Thyroid gland (tissue), 4 donors: ENCODE measurements at regions of chr14 and their contacts with region 1.

Region 1: DNA sequence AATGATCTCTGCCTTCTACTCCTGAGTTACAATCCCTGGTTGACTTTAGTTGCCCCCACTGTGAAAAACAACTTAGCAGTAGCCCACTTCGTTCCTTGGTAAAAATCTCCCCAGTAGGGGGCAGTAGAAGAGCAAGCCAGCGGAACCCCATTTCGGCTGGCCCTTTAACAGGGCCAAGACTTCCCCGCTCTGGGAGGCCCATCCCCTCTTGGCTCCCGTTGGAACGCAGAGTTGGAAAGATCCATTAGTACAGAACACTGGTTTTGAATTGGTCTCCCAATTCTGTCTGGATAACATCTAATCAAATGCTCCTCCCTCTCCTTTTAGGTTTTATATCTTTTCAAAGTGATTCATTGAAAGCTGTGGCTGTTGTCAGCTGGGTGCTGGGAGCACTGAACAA is 1133.3 kb downstream of the BCL11B start:
- DNase-seq: peak; percentile 44 to 48
- H3K4me3 ChIP-seq: no peak overlapping the region
- H3K27ac ChIP-seq: no peak overlapping the region
- H3K4me1 ChIP-seq: no peaks in the 10 kb centered on the region
- H3K27me3 ChIP-seq: no peaks in the 10 kb centered on the region
- CTCF ChIP-seq: peak in 5 of 6 experiments; percentile 19 to 61 (median 42)
- POLR2A ChIP-seq: no peak

Region 2: DNA sequence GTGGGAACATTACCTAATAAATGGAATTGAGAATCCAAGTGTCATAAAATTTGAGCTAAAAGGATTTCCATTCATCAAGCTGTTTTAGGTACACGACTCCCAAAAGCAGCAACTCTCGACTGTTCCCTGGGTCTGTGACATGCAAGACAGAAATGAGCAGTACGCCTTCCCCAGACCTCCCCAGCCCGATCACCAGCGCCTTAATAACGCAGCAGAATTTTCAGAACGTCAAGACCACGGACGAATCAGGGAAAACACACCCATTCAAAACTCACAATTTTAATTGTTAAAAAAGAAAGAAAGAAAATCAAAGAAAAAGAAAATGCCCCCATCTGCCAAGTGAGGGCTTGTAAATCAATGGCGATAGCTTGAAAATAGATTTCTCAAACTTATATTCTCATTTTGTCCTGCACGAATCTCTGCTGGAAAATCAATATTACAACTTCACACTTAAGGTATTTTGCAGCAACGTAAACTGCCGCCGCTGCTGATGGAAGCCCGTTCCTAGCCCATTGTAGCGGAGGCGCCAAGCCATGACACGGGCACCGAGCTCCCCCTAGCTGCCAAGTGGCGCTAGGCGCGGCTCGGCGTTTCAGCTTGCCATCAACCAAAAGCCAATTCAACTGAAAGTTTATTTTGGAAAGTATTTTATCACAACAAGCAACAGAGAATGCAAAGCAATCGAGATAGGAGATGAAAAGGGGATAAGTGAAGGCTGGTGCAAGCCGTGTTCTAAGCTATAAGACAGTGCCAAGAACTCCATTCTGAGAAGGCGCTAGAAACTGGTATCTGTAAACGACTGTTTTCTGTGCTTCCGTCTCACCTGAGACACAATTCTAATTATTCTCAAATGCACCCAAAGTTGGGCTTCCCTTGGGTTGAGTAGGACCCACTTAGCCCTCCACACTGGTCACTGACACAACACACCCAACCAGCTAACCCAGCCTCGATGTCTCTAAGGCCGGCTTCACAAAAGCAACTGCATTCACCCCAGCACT is 1127.8 kb after region 1 on chr14:
- intact Hi-C with region 1: loop called (anchors 5 kb)
- DNase-seq: peak; percentile 81 to 86
- H3K4me3 ChIP-seq: no peak overlapping the region
- H3K27ac ChIP-seq: no peak overlapping the region
- H3K4me1 ChIP-seq: peaks cover 2 to 13% of the 10 kb centered on the region in 2 donors
- H3K27me3 ChIP-seq: no peaks in the 10 kb centered on the region
- CTCF ChIP-seq: peak; percentile 81 to 98 (median 96)
- POLR2A ChIP-seq: no peak